Activated CD4-positive, alpha-beta T cell treated with anti-CD3 and anti-CD28 coated beads for 36 hours (primary cell): ENCODE measurements at regions of chr11 and their contacts with region 1.

Region 1: DNA sequence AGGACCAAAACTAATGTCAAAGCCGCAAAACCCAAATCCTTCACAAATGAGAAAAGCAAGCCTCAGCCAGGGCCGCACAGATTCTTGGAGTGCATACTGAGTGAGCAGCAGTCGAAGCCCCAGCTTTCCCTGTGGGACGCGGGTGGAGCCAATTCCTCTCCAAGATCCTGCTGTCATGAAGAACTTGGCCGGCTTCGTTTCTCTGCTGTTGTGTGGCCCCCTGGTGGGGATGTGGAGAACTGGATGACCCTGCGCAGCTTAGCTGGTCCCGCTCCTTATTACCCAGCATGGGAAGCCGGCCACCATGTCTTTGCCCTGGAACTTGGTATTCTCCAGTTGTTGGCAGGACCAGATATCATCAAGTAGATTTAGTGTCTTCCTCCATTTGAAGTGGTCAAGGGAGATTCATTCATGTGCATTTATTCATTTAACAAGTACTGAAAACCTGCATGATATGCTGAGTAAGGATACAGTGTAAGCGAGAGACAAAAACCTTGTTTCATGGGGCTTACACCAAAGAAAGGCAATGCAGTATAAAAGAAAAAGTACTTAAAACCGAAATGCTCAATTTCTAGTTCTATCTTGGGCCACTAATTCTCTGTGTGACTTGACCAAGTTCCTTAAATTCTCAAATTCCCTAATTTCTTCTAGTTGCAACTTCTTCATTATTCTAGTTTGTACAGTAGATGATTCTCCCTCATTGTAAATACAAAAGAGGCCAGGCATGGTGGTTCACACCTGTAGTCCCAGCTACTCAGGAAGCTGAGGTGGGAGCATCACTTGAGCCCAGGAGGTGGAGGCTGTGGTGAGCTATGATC is 56.7 kb upstream of the CRTAM start:
- DNase-seq: peak; percentile 87
- ATAC-seq: peak; percentile 74
- H3K4me3 Mint-ChIP-seq: no peak overlapping the region
- H3K27ac Mint-ChIP-seq: no peak overlapping the region
- H3K4me1 Mint-ChIP-seq: peaks cover 21% of the 10 kb centered on the region
- H3K27me3 Mint-ChIP-seq: no peaks in the 10 kb centered on the region

Region 2: DNA sequence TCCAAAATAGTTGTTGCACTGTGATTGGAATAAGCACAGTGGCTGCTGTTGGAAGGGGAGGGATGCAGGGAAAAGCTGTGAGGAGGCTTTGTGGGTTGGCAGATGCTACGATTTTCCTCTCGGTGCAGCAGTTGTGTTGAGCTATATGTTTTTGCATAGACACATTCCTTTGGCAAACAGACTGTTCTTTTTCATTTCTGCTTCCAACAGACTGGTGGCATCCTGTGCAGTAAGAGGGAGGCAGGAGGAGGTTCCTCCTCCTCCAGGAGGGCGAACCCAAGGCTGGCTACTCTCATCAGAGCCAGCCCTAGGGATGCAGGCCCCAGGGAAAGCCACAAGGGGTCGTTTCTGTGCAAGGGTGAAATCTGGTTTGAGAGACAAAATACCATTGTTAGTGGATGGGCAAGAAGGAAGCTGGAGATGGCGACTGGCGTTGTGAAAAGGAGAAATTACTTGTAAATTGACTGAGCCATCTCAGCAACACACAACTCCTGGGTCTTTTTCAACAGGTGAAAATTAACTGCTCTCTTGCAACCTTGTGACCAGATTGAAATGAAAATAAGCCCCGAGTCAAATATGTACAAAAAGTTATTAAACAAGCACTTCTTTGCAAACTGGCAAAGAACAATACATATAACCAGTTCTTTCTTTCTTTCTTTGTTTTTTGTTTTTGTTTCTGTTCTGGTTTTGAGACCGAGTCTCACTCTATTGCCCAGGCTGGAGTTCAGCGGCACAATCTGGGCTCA is 152.6 kb before region 1 on chr11:
- CTCF ChIA-PET with region 1: interaction called, 41 read pairs
- POLR2A ChIA-PET with region 1: interaction called, 4 read pairs
- intact Hi-C with region 1: loop called (anchors 1 kb)
- DNase-seq: peak; percentile 71
- ATAC-seq: peak; percentile 79
- H3K4me3 Mint-ChIP-seq: no peak overlapping the region
- H3K27ac Mint-ChIP-seq: no peak overlapping the region
- H3K4me1 Mint-ChIP-seq: peaks cover 3% of the 10 kb centered on the region
- H3K27me3 Mint-ChIP-seq: peaks cover 2% of the 10 kb centered on the region

Region 3: DNA sequence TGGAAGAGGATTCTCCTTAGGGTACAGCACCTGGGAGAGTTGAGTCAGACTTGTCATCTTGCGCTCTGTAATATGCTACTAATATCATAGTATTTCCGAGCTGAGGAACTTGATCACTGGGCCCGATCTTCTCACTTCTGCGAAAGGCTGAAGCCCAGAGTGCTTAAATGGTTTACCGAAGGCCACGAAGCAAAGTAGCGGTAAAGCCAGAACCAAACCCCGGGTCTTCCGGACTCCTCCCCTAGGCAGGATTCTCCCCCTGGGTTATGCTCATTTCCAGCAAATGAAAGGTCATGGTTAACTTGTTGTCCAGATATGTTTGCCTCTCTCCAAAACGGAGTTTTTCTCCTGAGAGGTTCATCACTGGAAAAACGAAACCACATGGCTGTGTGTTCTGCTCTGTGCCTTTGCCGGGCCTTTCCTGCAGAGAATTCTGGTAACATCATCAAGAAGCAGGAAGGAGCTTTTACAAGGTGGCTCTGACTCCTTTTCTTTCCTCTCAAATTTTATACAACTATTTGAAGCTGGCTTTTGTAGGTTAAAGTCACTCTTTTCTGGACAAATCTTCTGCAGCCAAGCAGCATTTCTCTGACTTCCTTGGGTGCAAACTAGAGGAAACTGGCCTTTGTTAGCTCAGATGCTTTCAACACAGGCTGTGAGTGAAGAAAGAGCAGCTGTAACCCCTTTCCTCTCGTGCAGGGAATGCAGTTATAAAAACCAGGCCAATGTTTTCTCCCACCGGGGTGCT is 90.6 kb before region 1 on chr11:
- CTCF ChIA-PET with region 1: interaction called, 6 read pairs
- POLR2A ChIA-PET with region 1: no interaction called
- intact Hi-C with region 1: loop called (anchors 1 to 5 kb)
- DNase-seq: peak; percentile 35
- ATAC-seq: peak; percentile 16
- H3K4me3 Mint-ChIP-seq: peak overlapping the region; percentile 46
- H3K27ac Mint-ChIP-seq: peak overlapping the region; percentile 80
- H3K4me1 Mint-ChIP-seq: peaks cover 79% of the 10 kb centered on the region
- H3K27me3 Mint-ChIP-seq: no peaks in the 10 kb centered on the region

Region 4: GRCh38 chr11:122749005-122749687 is 32.4 kb before region 1 on chr11:
- CTCF ChIA-PET with region 1: interaction called, 35 read pairs
- POLR2A ChIA-PET with region 1: no interaction called
- intact Hi-C with region 1: loop called (anchors 1 kb)
- DNase-seq: peak; percentile 81
- ATAC-seq: peak; percentile 80
- H3K4me3 Mint-ChIP-seq: no peak overlapping the region
- H3K27ac Mint-ChIP-seq: no peak overlapping the region
- H3K4me1 Mint-ChIP-seq: peaks cover 29% of the 10 kb centered on the region
- H3K27me3 Mint-ChIP-seq: peaks cover 6% of the 10 kb centered on the region

Region 5: GRCh38 chr11:122796128-122796717 is 14.6 kb after region 1 on chr11:
- CTCF ChIA-PET with region 1: interaction called, 14 read pairs
- POLR2A ChIA-PET with region 1: no interaction called
- intact Hi-C with region 1: no loop called
- DNase-seq: peak; percentile 84
- ATAC-seq: peak; percentile 91
- H3K4me3 Mint-ChIP-seq: no peak overlapping the region
- H3K27ac Mint-ChIP-seq: no peak overlapping the region
- H3K4me1 Mint-ChIP-seq: peaks cover 2% of the 10 kb centered on the region
- H3K27me3 Mint-ChIP-seq: no peaks in the 10 kb centered on the region